Adrenal gland (tissue), 19 donors: ENCODE measurements at regions of chr13 and their contacts with region 1.

Region 1: DNA sequence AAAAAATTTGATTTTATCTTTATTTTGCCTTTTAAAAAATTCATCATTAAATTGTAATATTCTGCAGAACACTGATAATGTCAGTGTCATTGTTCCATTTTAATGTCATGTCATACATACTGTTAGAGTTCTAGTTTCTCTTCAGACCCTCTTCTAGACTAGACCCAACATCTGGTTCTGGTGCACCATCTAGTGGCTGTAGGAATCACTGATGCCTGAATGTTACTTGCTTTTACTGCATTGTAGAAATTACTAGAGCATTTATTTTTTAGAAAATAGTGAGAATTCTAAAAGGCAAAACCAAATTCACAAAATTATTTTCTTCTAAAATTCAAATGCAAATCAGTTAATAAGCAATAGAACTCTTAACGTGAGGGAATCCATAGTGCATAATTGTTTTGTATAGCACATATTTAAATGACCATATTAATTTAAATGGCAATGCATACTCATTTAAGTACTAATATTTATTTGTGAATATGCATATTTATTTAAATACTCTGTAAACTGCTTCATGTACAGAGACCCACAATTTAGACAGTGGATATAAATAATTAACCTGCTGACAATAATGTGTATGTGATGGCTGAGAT is 425.7 kb downstream of the KLF12 start:
- DNase-seq: peak; percentile 19 to 68 (median 57)
- H3K4me3 ChIP-seq: no peak overlapping the region
- H3K27ac ChIP-seq: no peak overlapping the region
- H3K4me1 ChIP-seq: no peaks in the 10 kb centered on the region
- H3K27me3 ChIP-seq: no peaks in the 10 kb centered on the region
- CTCF ChIP-seq: peak; percentile 59 to 88 (median 82)
- POLR2A ChIP-seq: no peak

Region 2: DNA sequence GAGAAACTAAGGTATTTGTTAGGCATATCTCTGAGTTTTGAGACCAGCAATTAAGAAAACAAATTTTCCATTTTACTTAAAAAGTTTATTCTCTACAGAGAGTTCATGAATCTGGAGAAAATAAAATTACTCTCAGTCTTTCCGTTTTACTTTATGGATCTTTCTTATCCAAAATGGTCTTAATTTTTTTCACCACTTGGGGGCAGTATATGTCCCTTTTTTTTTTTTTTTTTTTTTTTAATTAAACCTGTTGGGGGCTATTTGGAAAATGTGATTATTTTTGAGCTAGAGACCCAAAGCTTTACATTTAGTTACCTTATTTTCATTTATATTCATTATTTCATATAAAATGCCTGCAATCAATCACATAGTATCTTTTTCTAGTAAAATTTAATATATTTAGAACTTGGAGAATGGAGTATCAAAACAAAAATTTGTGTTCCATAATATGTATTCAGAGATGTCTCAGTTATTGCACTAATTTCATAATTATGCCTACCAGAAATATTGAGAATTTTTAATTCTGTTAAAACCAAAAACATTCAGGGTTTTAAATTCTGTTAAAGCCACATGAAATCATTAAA is 899.5 kb before region 1 on chr13:
- intact Hi-C with region 1: loop called in 1 of 2 experiments (anchors 5 kb)
- DNase-seq: no peak
- H3K4me3 ChIP-seq: no peak overlapping the region
- H3K27ac ChIP-seq: no peak overlapping the region
- H3K4me1 ChIP-seq: no peaks in the 10 kb centered on the region
- H3K27me3 ChIP-seq: no peaks in the 10 kb centered on the region
- CTCF ChIP-seq: peak in 4 of 6 experiments; percentile 46 to 74 (median 58)
- POLR2A ChIP-seq: no peak

Region 3: GRCh38 chr13:73967397-73968165 is 259.1 kb after region 1 on chr13:
- intact Hi-C with region 1: no loop called
- DNase-seq: no peak
- H3K4me3 ChIP-seq: no peak overlapping the region
- H3K27ac ChIP-seq: no peak overlapping the region
- H3K4me1 ChIP-seq: no peaks in the 10 kb centered on the region
- H3K27me3 ChIP-seq: no peaks in the 10 kb centered on the region
- CTCF ChIP-seq: no peak
- POLR2A ChIP-seq: no peak